ENCODE measurements at regions of chr10 and their contacts with region 1.

Region 1: GRCh38 chr10:32367793-32368453 is 21.0 kb upstream of the EPC1 start:
- DNase-seq: peak; percentile 44 to 79 (median 73)
- ATAC-seq: peak; percentile 92
- H3K4me3 ChIP-seq: no peak overlapping the region
- H3K4me3 Mint-ChIP-seq: peak overlapping the region; percentile 11 to 85 (median 64)
- H3K27ac ChIP-seq: peak overlapping the region; percentile 41
- H3K27ac Mint-ChIP-seq: peak overlapping the region; percentile 26 to 92 (median 75)
- H3K4me1 ChIP-seq: peaks cover 9 to 33% of the 10 kb centered on the region in 2 donors
- H3K4me1 Mint-ChIP-seq: peaks cover 29 to 91% (median 70%) of the 10 kb centered on the region in 7 donors
- H3K27me3 ChIP-seq: no peaks in the 10 kb centered on the region
- H3K27me3 Mint-ChIP-seq: no peaks in the 10 kb centered on the region

Region 2: DNA sequence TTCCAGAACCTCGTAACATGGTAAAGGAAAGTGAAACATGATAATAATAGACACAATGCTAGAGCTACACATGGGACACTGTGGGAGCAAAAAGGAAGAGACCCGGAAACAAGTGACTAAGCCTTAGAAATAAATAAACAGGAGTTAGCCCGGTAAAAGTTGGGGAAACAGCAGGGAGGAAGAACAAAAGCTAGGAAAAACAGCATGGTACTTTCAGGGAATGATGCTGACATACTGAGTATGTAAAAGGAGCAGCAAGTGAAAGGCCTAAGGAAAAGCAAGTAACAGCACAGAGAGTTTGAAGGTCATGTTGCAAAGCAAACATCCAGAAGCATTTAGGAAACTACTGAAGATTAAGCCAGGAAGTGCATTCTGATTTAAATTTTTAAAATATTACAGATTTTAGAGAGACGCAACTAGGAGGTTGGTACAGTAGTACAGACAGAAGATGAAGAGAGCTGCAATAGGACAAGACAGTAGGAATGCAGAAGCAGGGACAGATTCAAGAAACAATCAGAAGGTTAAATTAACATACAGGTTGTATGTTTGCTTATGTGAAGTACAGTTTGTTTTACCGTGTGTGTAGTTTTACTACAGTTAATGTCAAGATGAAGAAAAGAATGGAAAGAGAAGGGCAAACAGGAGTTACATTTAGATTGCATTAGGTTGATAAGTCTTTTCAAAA is 502.9 kb before region 1 on chr10:
- CTCF ChIA-PET with region 1: no interaction called
- POLR2A ChIA-PET with region 1: no interaction called
- intact Hi-C with region 1: loop called (anchors 2 to 10 kb)
- DNase-seq: no peak
- ATAC-seq: no peak
- H3K4me3 ChIP-seq: no peak overlapping the region
- H3K4me3 Mint-ChIP-seq: peak overlapping the region in 1 of 10 donors; percentile 40
- H3K27ac ChIP-seq: no peak overlapping the region
- H3K27ac Mint-ChIP-seq: peak overlapping the region in 3 of 9 donors; percentile 1 to 3 (median 2)
- H3K4me1 ChIP-seq: peaks cover 0 to 3% of the 10 kb centered on the region in 2 donors
- H3K4me1 Mint-ChIP-seq: peaks cover 8 to 41% (median 34%) of the 10 kb centered on the region in 7 donors
- H3K27me3 ChIP-seq: no peaks in the 10 kb centered on the region
- H3K27me3 Mint-ChIP-seq: no peaks in the 10 kb centered on the region

Region 3: DNA sequence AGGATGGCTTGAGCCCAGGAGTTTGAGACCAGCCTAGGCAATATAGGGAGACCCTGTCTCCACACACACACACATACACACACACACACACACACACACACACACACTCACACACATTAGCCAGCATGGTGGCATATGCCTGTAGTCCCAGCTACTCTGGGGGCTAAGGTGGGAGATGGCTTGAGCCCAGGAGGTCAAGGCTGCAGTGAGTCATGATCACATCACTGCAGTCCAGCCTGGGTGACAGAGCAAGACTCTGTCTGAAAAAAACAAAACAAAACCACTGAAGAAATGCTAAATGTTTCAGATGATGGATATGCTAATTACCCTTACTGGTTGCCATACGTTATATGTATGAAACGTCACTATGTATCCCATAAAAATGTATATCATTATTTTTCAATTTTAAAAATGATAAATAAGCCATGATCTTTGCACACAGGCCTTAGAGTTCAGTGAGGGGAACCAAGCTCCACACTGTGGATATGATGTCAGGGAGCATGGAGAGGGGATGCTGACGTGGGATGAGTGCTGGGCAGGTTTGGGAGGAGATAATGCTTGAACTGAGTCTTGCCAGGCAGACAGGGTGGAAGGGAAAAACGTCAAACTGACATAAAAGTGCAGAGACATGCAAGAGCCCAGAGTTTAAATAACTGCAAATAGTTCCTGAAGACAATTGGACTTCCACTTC is 393.3 kb before region 1 on chr10:
- CTCF ChIA-PET with region 1: no interaction called
- POLR2A ChIA-PET with region 1: no interaction called
- intact Hi-C with region 1: no loop called
- DNase-seq: no peak
- ATAC-seq: no peak
- H3K4me3 ChIP-seq: no peak overlapping the region
- H3K4me3 Mint-ChIP-seq: peak overlapping the region in 3 of 10 donors; percentile 4 to 22 (median 12)
- H3K27ac ChIP-seq: no peak overlapping the region
- H3K27ac Mint-ChIP-seq: peak overlapping the region in 1 of 9 donors; percentile 21
- H3K4me1 ChIP-seq: peaks cover 7 to 18% of the 10 kb centered on the region in 2 donors
- H3K4me1 Mint-ChIP-seq: peaks cover 24 to 34% (median 28%) of the 10 kb centered on the region in 7 donors
- H3K27me3 ChIP-seq: no peaks in the 10 kb centered on the region
- H3K27me3 Mint-ChIP-seq: no peaks in the 10 kb centered on the region

Region 4: DNA sequence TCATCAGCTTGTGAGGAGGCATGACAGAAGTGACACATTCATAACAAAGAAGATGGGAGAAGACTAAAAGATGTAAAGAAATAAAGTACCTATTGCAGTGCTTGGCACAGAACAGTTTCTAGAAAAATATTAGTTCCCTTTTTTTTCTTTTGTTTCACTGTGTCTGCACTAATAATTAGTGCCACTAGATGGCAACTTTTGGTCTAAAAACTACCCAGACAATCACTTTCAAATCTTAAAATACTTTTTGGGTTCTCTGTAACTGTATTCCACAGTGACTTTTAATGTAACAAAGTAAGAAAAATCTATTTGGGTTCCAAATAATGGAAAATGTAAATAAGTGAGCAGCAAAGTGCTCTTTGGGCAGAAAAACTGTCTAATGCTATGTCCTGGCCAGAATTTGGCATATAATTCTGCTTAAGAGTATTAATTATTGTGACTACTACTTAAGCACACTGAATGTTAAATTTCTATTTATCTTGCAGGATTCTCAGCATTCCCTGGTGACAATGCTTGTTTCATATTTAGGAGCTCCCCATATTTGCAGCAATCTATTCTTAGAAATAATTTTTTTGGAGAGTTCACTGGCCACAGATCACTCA is 176.9 kb before region 1 on chr10:
- CTCF ChIA-PET with region 1: interaction called, 5 read pairs
- POLR2A ChIA-PET with region 1: interaction called, 3 read pairs
- intact Hi-C with region 1: loop called (anchors 1 kb)
- DNase-seq: peak in 6 of 9 donors; percentile 17 to 49 (median 42)
- ATAC-seq: peak; percentile 70
- H3K4me3 ChIP-seq: no peak overlapping the region
- H3K4me3 Mint-ChIP-seq: no peak overlapping the region
- H3K27ac ChIP-seq: no peak overlapping the region
- H3K27ac Mint-ChIP-seq: peak overlapping the region in 1 of 9 donors; percentile 3
- H3K4me1 ChIP-seq: no peaks in the 10 kb centered on the region
- H3K4me1 Mint-ChIP-seq: peaks cover 0 to 5% (median 4%) of the 10 kb centered on the region in 7 donors
- H3K27me3 ChIP-seq: no peaks in the 10 kb centered on the region
- H3K27me3 Mint-ChIP-seq: peaks cover 0 to 9% (median 0%) of the 10 kb centered on the region in 5 donors

Region 5: DNA sequence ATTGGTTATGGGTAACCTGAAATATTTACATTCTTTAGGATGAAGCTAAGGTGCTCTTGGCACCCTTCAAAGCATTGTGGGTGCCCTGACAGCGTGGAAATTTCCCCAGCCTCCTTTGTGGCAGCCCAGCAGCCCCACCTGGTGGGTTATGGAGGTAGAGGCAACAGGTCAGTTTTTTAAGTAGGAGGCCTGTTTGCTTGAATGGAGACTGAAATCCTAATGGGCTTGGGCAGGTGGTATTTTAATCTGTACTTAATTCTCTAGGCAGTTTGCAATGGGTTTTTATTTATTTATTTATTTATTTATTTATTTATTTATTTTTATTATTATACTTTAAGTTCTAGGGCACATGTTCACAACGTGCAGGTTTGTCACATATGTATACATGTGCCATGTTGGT is 160.4 kb before region 1 on chr10:
- CTCF ChIA-PET with region 1: no interaction called
- POLR2A ChIA-PET with region 1: no interaction called
- intact Hi-C with region 1: loop called in 1 of 2 experiments (anchors 1 kb)
- DNase-seq: peak; percentile 18 to 65 (median 40)
- ATAC-seq: peak; percentile 91
- H3K4me3 ChIP-seq: no peak overlapping the region
- H3K4me3 Mint-ChIP-seq: no peak overlapping the region
- H3K27ac ChIP-seq: no peak overlapping the region
- H3K27ac Mint-ChIP-seq: no peak overlapping the region
- H3K4me1 ChIP-seq: no peaks in the 10 kb centered on the region
- H3K4me1 Mint-ChIP-seq: peaks cover 0 to 5% (median 4%) of the 10 kb centered on the region in 7 donors
- H3K27me3 ChIP-seq: no peaks in the 10 kb centered on the region
- H3K27me3 Mint-ChIP-seq: peaks cover 0 to 6% (median 0%) of the 10 kb centered on the region in 5 donors

Region 6: GRCh38 chr10:32256613-32257437 is 111.1 kb before region 1 on chr10:
- CTCF ChIA-PET with region 1: interaction called, 18 read pairs
- POLR2A ChIA-PET with region 1: interaction called, 5 read pairs
- intact Hi-C with region 1: loop called (anchors 1 kb)
- DNase-seq: peak; percentile 31 to 67 (median 57)
- ATAC-seq: peak; percentile 89
- H3K4me3 ChIP-seq: no peak overlapping the region
- H3K4me3 Mint-ChIP-seq: peak overlapping the region in 1 of 10 donors; percentile 60
- H3K27ac ChIP-seq: no peak overlapping the region
- H3K27ac Mint-ChIP-seq: peak overlapping the region in 1 of 9 donors; percentile 51
- H3K4me1 ChIP-seq: peaks cover 0 to 5% of the 10 kb centered on the region in 2 donors
- H3K4me1 Mint-ChIP-seq: peaks cover 1 to 13% (median 5%) of the 10 kb centered on the region in 7 donors
- H3K27me3 ChIP-seq: no peaks in the 10 kb centered on the region
- H3K27me3 Mint-ChIP-seq: no peaks in the 10 kb centered on the region

Region 7: DNA sequence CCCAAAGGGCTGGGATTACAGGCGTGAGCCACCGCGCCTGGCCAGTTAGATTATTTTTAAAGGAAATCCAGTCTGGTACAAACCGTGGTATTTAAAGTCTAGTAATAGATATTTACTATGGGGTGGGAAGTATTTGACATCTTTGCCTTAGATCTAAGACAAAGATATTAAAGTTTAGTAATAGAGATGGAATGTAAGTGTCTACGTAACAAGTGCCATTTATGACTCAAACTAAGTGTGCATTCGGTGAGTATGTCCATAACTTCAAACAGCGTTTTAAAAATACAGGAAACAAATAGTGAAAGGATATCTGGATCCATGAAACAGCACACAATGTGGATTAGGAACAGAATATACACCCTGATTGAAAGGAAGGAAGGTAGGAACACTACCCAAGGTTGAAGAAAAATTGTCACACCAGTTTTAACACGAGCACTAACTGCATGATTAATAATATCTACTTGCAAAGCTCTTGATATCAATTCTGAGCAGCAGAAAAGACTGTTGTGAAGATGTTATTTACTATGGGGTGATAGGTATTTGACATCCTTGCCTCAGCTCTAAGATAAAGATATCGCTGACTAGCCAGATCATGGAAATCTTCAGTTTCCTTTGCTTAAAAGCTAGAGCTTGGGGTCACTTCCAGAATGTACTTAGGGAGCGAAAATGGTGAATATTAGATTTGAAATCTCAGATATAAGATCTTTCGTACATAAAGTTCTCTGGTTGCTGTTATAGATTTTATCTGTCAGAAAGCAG is 69.7 kb before region 1 on chr10:
- CTCF ChIA-PET with region 1: no interaction called
- POLR2A ChIA-PET with region 1: no interaction called
- intact Hi-C with region 1: no loop called
- DNase-seq: no peak
- ATAC-seq: no peak
- H3K4me3 ChIP-seq: no peak overlapping the region
- H3K4me3 Mint-ChIP-seq: peak overlapping the region in 7 of 10 donors; percentile 25 to 69 (median 48)
- H3K27ac ChIP-seq: no peak overlapping the region
- H3K27ac Mint-ChIP-seq: peak overlapping the region in 7 of 9 donors; percentile 34 to 91 (median 73)
- H3K4me1 ChIP-seq: peaks cover 0 to 32% of the 10 kb centered on the region in 2 donors
- H3K4me1 Mint-ChIP-seq: peaks cover 38 to 91% (median 75%) of the 10 kb centered on the region in 7 donors
- H3K27me3 ChIP-seq: no peaks in the 10 kb centered on the region
- H3K27me3 Mint-ChIP-seq: no peaks in the 10 kb centered on the region

Region 8: GRCh38 chr10:32332299-32332750 is 35.6 kb before region 1 on chr10:
- CTCF ChIA-PET with region 1: interaction called, 4 read pairs
- POLR2A ChIA-PET with region 1: no interaction called
- intact Hi-C with region 1: loop called in 1 of 2 experiments (anchors 5 kb)
- DNase-seq: peak; percentile 16 to 92 (median 71)
- ATAC-seq: peak; percentile 96
- H3K4me3 ChIP-seq: no peak overlapping the region
- H3K4me3 Mint-ChIP-seq: peak overlapping the region; percentile 52 to 84 (median 70)
- H3K27ac ChIP-seq: peak overlapping the region; percentile 56
- H3K27ac Mint-ChIP-seq: peak overlapping the region; percentile 41 to 95 (median 85)
- H3K4me1 ChIP-seq: peaks cover 80 to 84% of the 10 kb centered on the region in 2 donors
- H3K4me1 Mint-ChIP-seq: peaks cover 78 to 98% (median 94%) of the 10 kb centered on the region in 7 donors
- H3K27me3 ChIP-seq: no peaks in the 10 kb centered on the region
- H3K27me3 Mint-ChIP-seq: no peaks in the 10 kb centered on the region

Region 9: DNA sequence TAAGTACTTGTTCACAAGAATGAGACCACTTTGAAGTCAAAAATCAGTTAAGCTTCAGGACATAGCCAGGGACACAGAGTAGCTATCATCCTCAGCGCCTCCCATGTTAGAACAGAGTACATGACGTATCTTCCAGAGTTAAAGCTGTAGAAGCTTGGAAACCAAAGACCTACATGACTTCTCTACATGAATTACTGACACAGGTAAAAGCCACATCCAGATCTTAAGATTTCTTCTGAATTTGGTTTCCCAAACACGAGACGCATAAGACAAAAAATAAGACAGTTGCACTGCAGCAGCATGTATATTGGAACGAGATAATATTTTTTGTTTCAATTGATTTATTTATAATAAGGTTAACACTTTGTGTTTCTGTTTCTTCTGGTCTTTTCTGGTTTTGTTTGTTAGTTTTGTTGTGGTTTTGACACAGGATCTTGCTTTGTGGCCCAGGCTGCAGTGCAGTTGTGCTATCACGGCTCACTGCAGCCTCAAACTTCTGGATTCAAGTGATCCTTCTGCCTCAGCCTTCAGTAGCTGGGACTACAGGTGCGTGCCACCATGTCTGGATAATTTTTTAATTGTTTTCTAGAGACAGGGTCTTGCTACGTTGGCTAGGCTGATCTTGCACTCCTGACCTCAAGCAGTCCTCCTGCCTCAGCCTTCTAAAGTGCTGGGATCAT is 10.7 kb before region 1 on chr10:
- CTCF ChIA-PET with region 1: interaction called, 11 read pairs
- POLR2A ChIA-PET with region 1: interaction called, 7 read pairs
- intact Hi-C with region 1: loop called (anchors 1 kb)
- DNase-seq: peak in 7 of 9 donors; percentile 29 to 63 (median 48)
- ATAC-seq: peak; percentile 83
- H3K4me3 ChIP-seq: peak overlapping the region; percentile 26
- H3K4me3 Mint-ChIP-seq: peak overlapping the region; percentile 48 to 84 (median 65)
- H3K27ac ChIP-seq: peak overlapping the region; percentile 47
- H3K27ac Mint-ChIP-seq: peak overlapping the region; percentile 51 to 94 (median 90)
- H3K4me1 ChIP-seq: peaks cover 31 to 43% of the 10 kb centered on the region in 2 donors
- H3K4me1 Mint-ChIP-seq: peaks cover 39 to 91% (median 79%) of the 10 kb centered on the region in 7 donors
- H3K27me3 ChIP-seq: no peaks in the 10 kb centered on the region
- H3K27me3 Mint-ChIP-seq: no peaks in the 10 kb centered on the region